H1 (cell line): ENCODE measurements at regions of chr1 and their contacts with region 1.

Region 1: DNA sequence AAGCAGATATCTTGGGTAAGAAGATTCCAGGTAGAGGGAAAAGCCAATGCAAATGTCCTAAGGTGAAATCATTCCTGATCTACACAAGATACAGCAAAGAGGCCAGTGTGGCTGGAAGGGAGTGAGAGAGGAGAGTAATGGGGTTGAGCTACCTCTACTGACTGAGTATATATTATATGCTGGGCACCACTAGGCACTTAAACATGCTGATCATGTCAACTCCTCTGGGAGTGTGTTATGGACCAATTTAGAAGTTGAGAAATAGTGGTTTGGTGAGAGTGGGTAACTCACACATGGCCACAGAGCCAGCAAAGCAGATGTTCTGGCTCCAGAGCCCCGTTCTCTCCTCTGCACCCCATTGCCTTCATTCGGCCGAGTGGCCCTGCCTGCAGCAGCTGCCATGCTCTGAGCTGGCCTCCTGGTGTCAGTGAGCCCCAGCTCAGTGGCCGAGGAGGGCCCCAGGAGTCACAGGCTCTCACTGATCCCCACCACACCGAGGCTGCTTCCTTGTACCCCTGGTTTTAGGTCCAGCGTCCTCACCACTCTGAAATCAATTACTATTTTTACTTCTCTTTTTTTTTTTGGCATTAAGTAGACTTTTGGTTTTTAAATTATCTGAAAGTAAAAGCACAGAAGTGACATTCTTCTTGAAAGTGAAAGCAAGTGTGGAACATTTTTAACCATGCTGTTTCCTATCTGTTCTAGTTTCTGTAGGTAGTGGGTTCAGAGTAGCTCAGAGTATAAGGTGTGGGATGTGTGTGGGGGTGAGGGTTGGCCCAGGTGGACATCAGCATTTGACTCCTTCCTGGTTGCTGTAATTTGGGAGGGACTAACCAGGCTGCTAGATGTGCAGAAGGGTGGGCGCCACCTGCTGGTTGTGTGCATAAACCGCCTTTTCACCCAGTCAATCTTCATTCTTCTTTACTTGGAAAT is 45.8 kb upstream of the CRNN start:
- DNase-seq: peak in 1 of 2 experiments; percentile 62
- H3K4me3 ChIP-seq: no peak overlapping the region
- H3K27ac ChIP-seq: no peak overlapping the region
- H3K4me1 ChIP-seq: no peaks in the 10 kb centered on the region
- H3K27me3 ChIP-seq: no peaks in the 10 kb centered on the region
- CTCF ChIP-seq: peak; percentile 57 to 68 (median 63)
- EP300 ChIP-seq: no peak
- POLR2A ChIP-seq: no peak
- RAD21 ChIP-seq: peak; percentile 20 to 37; a peak in 2 of 4 replicates

Region 2: GRCh38 chr1:152448095-152448494 is 11.8 kb before region 1 on chr1:
- CTCF ChIA-PET with region 1: interaction called, 10 read pairs
- POLR2A ChIA-PET with region 1: no interaction called
- DNase-seq: no peak
- H3K4me3 ChIP-seq: no peak overlapping the region
- H3K27ac ChIP-seq: no peak overlapping the region
- H3K4me1 ChIP-seq: no peaks in the 10 kb centered on the region; a peak in 1 of 7 replicates
- H3K27me3 ChIP-seq: no peaks in the 10 kb centered on the region
- CTCF ChIP-seq: no peak
- EP300 ChIP-seq: no peak
- POLR2A ChIP-seq: no peak
- RAD21 ChIP-seq: no peak